Panc1 (cell line): ENCODE measurements at regions of chr9 and their contacts with region 1.

Region 1: GRCh38 chr9:135343837-135344522 is 135.6 kb upstream of the PPP1R26 start:
- DNase-seq: peak; percentile 10
- ATAC-seq: peak; percentile 89
- H3K4me3 ChIP-seq: no peak overlapping the region
- H3K27ac ChIP-seq: no peak overlapping the region
- H3K4me1 ChIP-seq: no peaks in the 10 kb centered on the region
- H3K27me3 ChIP-seq: no peaks in the 10 kb centered on the region; the same call in 1 of the 2 replicates
- CTCF ChIP-seq: peak; percentile 92

Region 2: DNA sequence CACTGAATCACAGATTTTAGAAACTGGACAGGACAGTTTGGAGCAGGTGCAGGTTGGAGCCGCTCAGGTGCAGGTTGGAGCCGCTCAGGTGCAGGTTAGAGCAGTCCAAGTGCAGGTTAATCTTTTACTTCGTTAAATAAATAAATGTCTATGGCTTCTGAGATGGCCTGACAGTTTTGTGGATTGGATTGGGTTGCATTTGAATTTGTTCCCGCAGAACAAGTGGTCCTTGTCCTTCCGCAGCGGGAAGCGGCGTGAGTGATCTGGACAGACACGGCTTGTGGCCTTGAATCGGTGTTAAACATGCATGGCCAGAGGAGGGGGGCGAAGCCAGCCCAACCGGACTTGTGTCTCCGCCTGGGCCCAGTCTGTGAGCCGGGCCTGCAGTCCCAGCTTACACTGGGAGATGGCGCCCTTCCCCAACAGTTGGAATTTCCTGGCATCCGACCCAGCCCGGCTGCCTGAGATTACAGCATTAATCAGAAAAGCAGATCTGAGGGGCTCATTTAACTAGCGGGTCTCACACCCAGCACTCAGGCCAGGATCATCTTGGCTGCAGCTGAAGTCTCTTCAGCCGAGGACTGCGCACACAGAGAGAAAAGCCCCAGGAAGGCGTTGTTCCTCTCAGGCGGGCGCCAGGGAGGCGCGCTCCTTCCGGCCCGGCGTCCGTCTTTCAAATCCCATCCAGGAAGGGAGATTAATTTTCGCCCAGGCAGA is 258.0 kb before region 1 on chr9:
- CTCF ChIA-PET with region 1: no interaction called
- POLR2A ChIA-PET with region 1: no interaction called
- in situ Hi-C with region 1: no loop called
- intact Hi-C with region 1: loop called (anchors 5 kb)
- DNase-seq: peak; percentile 2
- ATAC-seq: peak; percentile 66; the same call in 1 of the 2 replicates
- H3K4me3 ChIP-seq: no peak overlapping the region
- H3K27ac ChIP-seq: no peak overlapping the region
- H3K4me1 ChIP-seq: no peaks in the 10 kb centered on the region
- H3K27me3 ChIP-seq: peaks cover 2% of the 10 kb centered on the region; the same call in 1 of the 2 replicates
- CTCF ChIP-seq: peak; percentile 84

Region 3: GRCh38 chr9:135410831-135411473 is 67.0 kb after region 1 on chr9:
- CTCF ChIA-PET with region 1: interaction called, 3 read pairs
- POLR2A ChIA-PET with region 1: no interaction called
- in situ Hi-C with region 1: no loop called
- intact Hi-C with region 1: loop called (anchors 5 kb)
- DNase-seq: no peak
- ATAC-seq: no peak
- H3K4me3 ChIP-seq: no peak overlapping the region
- H3K27ac ChIP-seq: no peak overlapping the region
- H3K4me1 ChIP-seq: no peaks in the 10 kb centered on the region
- H3K27me3 ChIP-seq: no peaks in the 10 kb centered on the region
- CTCF ChIP-seq: no peak